ENCODE measurements at regions of chr2 and their contacts with region 1.

Region 1: DNA sequence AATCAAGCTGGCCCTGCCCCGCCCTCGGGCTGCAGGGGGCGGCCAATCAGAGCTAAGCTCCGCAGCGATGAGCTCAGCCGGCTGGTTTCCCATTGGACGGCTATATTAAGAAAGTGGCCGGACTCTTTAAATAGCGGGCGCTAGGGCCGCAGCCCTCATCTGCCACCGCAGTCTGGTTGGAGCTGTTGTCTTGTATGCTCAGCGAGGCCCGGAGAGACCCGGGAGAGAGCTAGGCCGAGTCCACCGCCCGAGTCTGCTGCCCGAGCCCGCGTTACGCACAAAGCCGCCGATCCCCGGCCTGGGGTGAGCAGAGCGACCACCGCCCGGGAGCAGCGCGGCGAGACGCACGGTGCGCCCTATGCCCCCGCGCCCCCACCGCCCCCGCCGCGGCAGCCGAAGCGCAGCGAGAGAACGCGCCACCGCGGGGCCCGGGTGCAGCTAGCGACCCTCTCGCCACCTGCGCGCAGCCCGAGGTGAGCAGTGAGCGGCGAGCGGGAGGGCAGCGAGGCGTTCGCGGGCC is at the start of gene RHOB:
- H3K4me3 ChIP-seq: peak within 1 kb of the TSS; percentile 90
- H3K27ac ChIP-seq: peak within 1 kb of the TSS; percentile 95
- H3K4me1 ChIP-seq: peaks cover 9% of the 10 kb centered on the region
- CTCF ChIP-seq: no peak

Region 2: DNA sequence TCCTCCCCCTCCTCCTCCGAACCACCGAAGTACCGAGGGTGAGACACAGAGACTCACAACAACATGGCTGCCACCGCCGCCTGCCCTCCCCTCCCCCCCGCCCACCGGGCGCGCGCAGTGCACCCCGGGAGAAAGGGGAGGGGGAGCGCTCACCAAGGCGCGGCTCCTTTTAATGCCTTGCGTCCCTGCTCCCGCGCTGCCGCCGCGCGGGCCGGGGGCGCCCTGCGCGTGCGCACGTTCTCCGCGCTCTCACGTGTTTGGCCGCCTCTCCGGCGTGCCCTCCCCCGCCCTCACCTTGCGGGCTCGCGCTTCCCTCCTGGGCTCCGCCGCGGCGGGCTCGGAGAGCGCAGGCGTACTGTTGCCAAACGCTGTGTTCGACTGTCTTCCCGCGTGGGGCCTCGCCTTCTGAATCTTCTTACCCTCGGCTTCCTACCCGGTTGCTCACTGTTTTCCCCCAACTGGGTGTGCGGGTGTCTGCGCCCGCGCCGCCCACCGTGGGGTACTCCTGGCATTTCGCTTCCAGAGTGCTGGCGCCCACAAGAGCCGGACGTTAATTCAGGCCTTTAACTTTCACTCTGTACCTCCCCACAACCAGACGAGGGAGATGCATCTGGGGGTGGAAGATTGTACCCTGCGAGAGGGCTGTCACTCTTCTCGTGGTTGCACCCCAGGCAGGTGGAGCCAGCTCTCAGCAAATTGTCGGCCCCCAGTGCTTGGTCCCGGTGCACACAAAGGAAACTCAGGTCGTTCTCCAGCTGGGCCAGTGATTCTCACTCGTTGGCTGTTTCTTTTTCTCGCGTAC is 96.0 kb before region 1 on chr2 and contains the start of gene PUM2:
- CTCF ChIA-PET with region 1: interaction called, 3 read pairs
- POLR2A ChIA-PET with region 1: interaction called, 16 read pairs
- H3K4me3 ChIP-seq: peak within 1 kb of the TSS; percentile 92
- H3K27ac ChIP-seq: peak within 1 kb of the TSS; percentile 99
- H3K4me1 ChIP-seq: peaks cover 10% of the 10 kb centered on the region; the same call in 1 of the 2 replicates
- CTCF ChIP-seq: peak; percentile 76; the same call in 1 of the 2 replicates

Region 3: GRCh38 chr2:20424300-20425290 is 22.4 kb before region 1 on chr2:
- CTCF ChIA-PET with region 1: interaction called, 5 read pairs
- POLR2A ChIA-PET with region 1: interaction called, 22 read pairs
- H3K4me3 ChIP-seq: no peak overlapping the region
- H3K27ac ChIP-seq: no peak overlapping the region
- H3K4me1 ChIP-seq: no peaks in the 10 kb centered on the region
- CTCF ChIP-seq: no peak

Region 4: GRCh38 chr2:20490260-20491181 is 43.5 kb after region 1 on chr2:
- CTCF ChIA-PET with region 1: interaction called, 3 read pairs
- POLR2A ChIA-PET with region 1: interaction called, 50 read pairs
- H3K4me3 ChIP-seq: no peak overlapping the region
- H3K27ac ChIP-seq: no peak overlapping the region
- H3K4me1 ChIP-seq: no peaks in the 10 kb centered on the region
- CTCF ChIP-seq: no peak

Region 5: DNA sequence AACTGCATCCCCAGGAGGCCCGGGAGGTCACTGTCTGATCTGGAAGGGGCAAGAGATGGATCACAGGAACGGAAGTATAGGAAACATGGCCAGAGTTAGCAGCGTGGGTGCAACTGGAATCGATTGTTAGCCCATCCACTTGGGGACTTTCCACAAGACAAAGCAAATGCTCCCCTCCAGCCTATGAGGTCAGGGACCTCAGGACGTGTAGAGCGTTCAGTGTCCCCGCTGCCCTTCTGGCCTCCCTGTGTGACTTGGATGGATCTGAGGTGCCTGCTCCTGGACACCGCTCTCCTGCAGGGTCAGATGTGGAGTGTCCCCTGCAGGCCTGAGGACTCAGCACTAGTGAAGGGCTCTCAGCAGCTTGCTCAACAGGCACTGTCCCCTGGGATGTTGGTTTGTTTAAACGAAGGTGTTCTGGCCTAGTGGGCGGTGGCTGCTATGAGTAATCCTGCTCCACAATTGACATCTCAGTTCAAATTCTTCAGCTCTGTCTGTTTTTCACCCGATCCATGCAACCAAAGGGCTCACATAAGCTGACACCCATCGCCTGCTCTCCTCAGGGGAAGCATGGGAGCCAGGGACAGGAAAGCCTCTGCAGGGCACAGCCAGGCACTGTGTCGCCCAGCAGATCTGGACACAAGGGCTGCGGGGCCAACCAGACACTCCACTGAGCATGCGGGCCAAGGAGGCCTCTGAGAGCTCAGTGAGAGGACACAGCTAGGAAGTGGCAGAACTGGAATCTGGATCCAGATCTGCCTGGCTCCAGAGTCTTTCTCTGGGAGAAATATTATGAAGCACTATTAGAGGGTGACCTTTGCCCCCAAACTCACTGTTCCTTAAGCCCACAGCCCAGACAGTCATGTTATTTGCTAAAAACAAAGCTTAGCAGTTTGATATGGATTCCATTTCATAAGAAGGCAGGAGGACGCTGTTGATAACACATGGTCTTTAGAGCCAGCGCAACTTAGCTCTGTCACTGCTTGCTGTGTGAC is 78.4 kb after region 1 on chr2:
- CTCF ChIA-PET with region 1: interaction called, 5 read pairs
- POLR2A ChIA-PET with region 1: interaction called, 26 read pairs
- H3K4me3 ChIP-seq: no peak overlapping the region
- H3K27ac ChIP-seq: no peak overlapping the region
- H3K4me1 ChIP-seq: no peaks in the 10 kb centered on the region
- CTCF ChIP-seq: no peak

Region 6: DNA sequence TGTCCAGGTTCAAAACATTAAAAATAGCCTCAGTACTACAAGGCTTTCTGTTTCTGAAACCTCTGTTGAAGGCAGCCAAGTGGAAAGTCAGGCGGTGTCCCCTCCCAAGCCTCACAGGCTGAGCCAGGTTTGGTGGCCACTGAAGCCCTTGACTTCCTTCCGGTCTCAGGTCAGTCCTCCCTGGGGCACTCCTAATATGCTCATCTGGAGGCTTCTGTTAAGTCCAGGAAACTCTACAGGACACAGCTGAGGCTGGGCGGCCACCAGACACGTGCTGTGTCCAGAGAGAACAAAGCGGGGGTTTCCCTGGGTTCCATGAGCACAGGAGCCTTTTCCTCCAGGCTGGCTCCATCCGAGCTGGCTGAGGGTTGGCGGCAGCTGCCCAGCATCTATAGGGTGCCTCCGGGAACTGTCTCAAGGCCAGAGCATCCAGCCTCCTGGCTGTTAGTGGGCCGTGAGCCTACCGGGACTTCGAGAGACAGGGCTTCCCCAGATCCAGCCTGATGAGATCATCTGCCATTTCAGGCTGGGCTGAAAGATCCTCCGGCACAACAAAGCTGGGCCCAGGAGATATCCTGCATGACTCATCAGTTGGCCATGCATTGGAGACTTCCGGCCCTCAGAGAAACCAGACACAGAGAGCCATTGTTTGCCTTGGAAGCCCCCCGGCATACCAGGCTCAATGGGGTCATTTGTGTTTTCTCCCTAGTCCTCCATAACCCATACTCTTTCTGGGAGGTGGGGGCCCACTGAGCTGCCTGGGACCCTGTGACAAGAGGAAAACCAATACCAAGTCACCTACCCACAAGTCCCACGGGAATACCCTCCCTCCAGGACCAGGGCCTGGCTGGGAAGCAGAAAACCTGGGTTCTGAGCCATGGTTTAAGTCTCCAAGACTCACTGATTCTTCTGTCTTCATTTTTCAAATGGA is 132.2 kb after region 1 on chr2:
- CTCF ChIA-PET with region 1: interaction called, 5 read pairs
- POLR2A ChIA-PET with region 1: interaction called, 100 read pairs
- H3K4me3 ChIP-seq: no peak overlapping the region
- H3K27ac ChIP-seq: peak overlapping the region; percentile 44; the same call in 1 of the 2 replicates
- H3K4me1 ChIP-seq: peaks cover 11% of the 10 kb centered on the region
- CTCF ChIP-seq: no peak

Region 7: GRCh38 chr2:20625491-20626391 is 178.8 kb after region 1 on chr2:
- CTCF ChIA-PET with region 1: interaction called, 9 read pairs
- POLR2A ChIA-PET with region 1: interaction called, 150 read pairs
- H3K4me3 ChIP-seq: no peak overlapping the region
- H3K27ac ChIP-seq: no peak overlapping the region
- H3K4me1 ChIP-seq: no peaks in the 10 kb centered on the region
- CTCF ChIP-seq: no peak